ENCODE measurements at regions of chr1 and their contacts with region 1.

Region 1: DNA sequence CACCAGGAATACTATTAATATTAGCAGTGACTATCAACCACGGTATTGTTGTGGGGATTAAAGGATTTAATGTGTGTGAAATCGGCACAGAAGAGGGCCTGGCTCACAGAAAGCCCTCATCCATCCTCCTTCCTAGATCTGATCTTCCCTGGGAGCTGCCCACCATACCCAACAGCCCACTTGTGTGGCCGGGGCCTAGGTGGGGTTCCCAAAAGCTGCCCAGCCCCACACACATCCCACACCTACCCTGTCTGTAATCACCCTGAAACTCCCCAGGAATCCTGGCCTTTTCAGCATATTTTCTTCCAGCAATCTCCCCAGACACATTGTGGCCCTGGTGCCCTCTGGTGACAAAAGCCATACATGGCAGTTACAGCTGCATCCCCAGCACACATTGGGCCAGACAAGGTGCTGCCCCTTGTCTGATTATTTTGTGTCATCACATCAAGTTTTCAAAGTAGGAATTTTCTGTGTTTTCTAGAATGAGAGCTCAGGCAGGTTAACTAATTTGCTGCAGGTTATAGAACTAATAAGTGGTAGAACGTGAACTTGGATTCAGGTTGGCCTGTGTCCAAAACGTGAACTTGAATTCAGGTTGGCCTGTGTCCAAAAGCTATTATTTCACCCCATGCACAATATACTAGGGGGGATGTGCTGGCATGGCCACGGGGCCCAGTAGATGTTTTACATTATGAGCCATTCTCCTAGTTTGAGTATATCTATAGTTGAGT is 5.3 kb upstream of the SLC6A9 start:
- DNase-seq: peak; percentile 80 to 91 (median 86)
- H3K4me3 ChIP-seq: no peak overlapping the region
- H3K27ac ChIP-seq: peak overlapping the region in 4 of 5 donors; percentile 43 to 86 (median 69)
- H3K4me1 ChIP-seq: peaks cover 21 to 29% of the 10 kb centered on the region in 2 donors
- H3K27me3 ChIP-seq: no peaks in the 10 kb centered on the region
- CTCF ChIP-seq: peak; percentile 57 to 92 (median 84)
- POLR2A ChIP-seq: no peak

Region 2: DNA sequence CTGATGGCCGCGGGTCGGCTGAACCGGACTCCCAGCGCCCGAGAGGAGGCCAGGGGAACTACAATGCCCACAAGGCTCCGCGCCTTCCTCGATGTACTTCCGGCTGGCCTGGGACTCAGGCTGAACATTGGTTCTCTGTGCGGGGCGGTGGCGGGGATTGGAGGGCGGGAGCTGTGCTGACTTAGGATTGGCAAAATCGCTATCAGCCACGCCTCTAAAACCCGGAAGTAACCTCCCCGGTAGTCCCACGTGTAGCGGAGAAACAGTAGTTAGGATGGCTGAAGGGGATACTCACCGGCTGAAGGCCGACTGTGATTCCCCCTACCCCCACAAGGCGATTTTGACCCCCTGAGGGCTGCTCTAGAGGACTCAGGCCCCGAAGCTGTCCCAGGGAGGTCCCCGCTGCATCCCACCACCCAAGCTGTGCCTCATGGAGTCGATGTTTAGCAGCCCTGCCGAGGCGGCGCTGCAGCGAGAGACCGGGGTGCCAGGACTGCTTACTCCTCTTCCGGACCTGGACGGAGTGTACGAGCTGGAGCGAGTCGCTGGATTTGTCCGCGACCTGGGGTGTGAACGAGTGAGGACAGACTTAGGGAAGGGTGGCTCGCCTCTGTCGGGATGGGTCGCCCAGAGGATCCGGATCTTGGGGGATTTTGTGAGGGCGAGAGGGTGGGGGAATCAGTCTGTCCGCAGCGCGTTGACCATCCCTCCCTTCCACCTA is 66.7 kb before region 1 on chr1 and contains the start of gene DPH2:
- intact Hi-C with region 1: no loop called
- DNase-seq: peak; percentile 96 to 99 (median 98)
- H3K4me3 ChIP-seq: peak within 1 kb of the TSS; percentile 7 to 96 (median 80)
- H3K27ac ChIP-seq: peak within 1 kb of the TSS in 1 of 5 donors; percentile 33
- H3K4me1 ChIP-seq: peaks cover 10 to 18% of the 10 kb centered on the region in 2 donors
- H3K27me3 ChIP-seq: no peaks in the 10 kb centered on the region
- CTCF ChIP-seq: peak in 2 of 6 experiments; percentile 15 to 19
- POLR2A ChIP-seq: no peak
- total RNA-seq, gene DPH2: 12.0 to 48.0 (median 24.4) TPM

Region 3: GRCh38 chr1:44002606-44003157 is 33.9 kb before region 1 on chr1:
- intact Hi-C with region 1: loop called (anchors 5 kb)
- DNase-seq: no peak
- H3K4me3 ChIP-seq: no peak overlapping the region
- H3K27ac ChIP-seq: no peak overlapping the region
- H3K4me1 ChIP-seq: peaks cover 0 to 3% of the 10 kb centered on the region in 2 donors
- H3K27me3 ChIP-seq: no peaks in the 10 kb centered on the region
- CTCF ChIP-seq: no peak
- POLR2A ChIP-seq: no peak

Measured in adrenal gland (tissue), 19 donors.